Psoas muscle (tissue), 8 donors: ENCODE measurements at regions of chr10 and their contacts with region 1.

Region 1: DNA sequence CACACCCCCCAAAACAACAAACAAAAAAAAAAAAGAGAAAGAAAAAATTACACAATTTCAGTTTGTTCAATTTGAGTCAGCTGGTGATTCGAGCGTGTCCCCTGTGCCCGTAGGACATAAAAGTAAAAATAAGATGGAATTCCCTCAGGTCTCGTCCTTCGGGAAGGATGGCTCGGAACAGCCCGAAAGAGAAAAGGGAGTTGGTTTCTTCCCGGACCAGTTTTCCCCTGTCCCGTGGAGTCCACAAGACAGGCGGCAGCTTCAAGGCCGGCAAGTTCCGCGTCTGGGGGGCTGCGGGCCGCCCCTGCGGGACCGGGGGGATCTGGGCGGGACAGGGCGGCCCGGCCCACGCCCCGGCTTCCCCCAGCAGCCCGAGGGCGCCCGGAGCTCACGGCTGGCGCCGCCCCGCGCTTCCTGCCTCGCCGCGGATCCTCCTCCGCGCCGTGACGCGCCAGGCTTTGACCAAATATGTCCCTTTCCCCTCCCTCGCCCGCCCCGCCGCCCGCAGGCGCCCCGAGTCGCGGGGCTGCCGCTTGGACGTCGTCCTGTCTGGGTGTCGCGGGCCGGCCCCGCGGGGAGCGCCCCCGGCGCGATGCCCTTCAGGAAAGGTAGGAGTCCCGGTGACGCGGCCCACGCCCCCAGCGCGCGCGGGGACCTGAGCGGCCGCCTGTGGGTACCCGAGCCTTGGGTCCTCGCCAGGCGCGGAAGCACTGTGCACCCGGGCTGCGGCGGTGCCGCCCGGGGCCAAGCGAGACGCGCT is 55.8 kb downstream of the RBM17 start:
- DNase-seq: peak; percentile 92 to 94
- ATAC-seq: peak; percentile 70 to 78 (median 76)
- H3K4me3 ChIP-seq: peak overlapping the region; percentile 99
- H3K27ac ChIP-seq: peak overlapping the region; percentile 96
- H3K4me1 ChIP-seq: peaks cover 49% of the 10 kb centered on the region
- H3K27me3 ChIP-seq: no peaks in the 10 kb centered on the region
- CTCF ChIP-seq: no peak

Region 2: GRCh38 chr10:6163364-6164270 is 19.0 kb after region 1 on chr10:
- intact Hi-C with region 1: loop called in 1 of 2 experiments (anchors 2 kb)
- DNase-seq: peak; percentile 94 to 97
- ATAC-seq: peak; percentile 90 to 98 (median 94)
- H3K4me3 ChIP-seq: peak overlapping the region; percentile 73
- H3K27ac ChIP-seq: peak overlapping the region; percentile 92
- H3K4me1 ChIP-seq: peaks cover 37% of the 10 kb centered on the region
- H3K27me3 ChIP-seq: no peaks in the 10 kb centered on the region
- CTCF ChIP-seq: no peak